CD8-positive, alpha-beta T cell (primary cell): ENCODE measurements at regions of chr12 and their contacts with region 1.

Region 1: GRCh38 chr12:810671-811415 is 58.5 kb downstream of the WNK1 start:
- DNase-seq: no peak
- ATAC-seq: peak; percentile 17
- H3K4me3 ChIP-seq: no peak overlapping the region
- H3K4me3 Mint-ChIP-seq: peak overlapping the region; percentile 33
- H3K27ac ChIP-seq: peak overlapping the region in 1 of 2 experiments; percentile 26
- H3K27ac Mint-ChIP-seq: peak overlapping the region; percentile 73
- H3K4me1 ChIP-seq: peaks cover 45% of the 10 kb centered on the region
- H3K4me1 Mint-ChIP-seq: peaks cover 68% of the 10 kb centered on the region
- H3K27me3 ChIP-seq: no peaks in the 10 kb centered on the region
- H3K27me3 Mint-ChIP-seq: no peaks in the 10 kb centered on the region
- CTCF ChIP-seq: no peak

Region 2: DNA sequence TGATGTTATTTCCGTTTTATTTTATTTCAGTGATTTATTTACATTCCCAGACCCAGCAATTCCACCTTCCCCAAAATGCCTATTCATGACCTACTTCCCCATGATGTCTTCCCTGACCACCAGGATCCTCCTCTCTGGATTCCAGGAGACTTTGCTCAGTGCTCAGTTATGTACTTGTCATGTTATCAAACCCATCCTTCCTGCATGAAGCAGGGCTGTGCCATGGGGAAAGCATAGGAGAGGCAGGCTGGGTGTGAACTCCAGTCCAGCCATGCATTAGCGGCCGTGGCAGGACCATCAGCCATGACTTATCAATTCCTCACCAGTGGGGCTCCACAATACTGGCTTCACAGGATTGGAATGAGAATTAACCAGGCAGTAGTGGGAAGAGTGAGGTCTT is 293.3 kb before region 1 on chr12:
- CTCF ChIA-PET with region 1: no interaction called
- POLR2A ChIA-PET with region 1: no interaction called
- intact Hi-C with region 1: no loop called
- DNase-seq: no peak
- ATAC-seq: no peak
- H3K4me3 ChIP-seq: no peak overlapping the region
- H3K4me3 Mint-ChIP-seq: no peak overlapping the region
- H3K27ac ChIP-seq: no peak overlapping the region
- H3K27ac Mint-ChIP-seq: no peak overlapping the region
- H3K4me1 ChIP-seq: no peaks in the 10 kb centered on the region
- H3K4me1 Mint-ChIP-seq: no peaks in the 10 kb centered on the region
- H3K27me3 ChIP-seq: no peaks in the 10 kb centered on the region
- H3K27me3 Mint-ChIP-seq: peaks cover 34% of the 10 kb centered on the region
- CTCF ChIP-seq: no peak

Region 3: GRCh38 chr12:575948-576612 is 234.8 kb before region 1 on chr12:
- CTCF ChIA-PET with region 1: interaction called, 107 read pairs
- POLR2A ChIA-PET with region 1: interaction called, 4 read pairs
- intact Hi-C with region 1: loop called (anchors 1 kb)
- DNase-seq: peak; percentile 73 to 95 (median 81)
- ATAC-seq: peak; percentile 98
- H3K4me3 ChIP-seq: peak overlapping the region; percentile 25 to 34
- H3K4me3 Mint-ChIP-seq: peak overlapping the region; percentile 69
- H3K27ac ChIP-seq: no peak overlapping the region
- H3K27ac Mint-ChIP-seq: peak overlapping the region; percentile 37
- H3K4me1 ChIP-seq: peaks cover 4% of the 10 kb centered on the region
- H3K4me1 Mint-ChIP-seq: peaks cover 14% of the 10 kb centered on the region
- H3K27me3 ChIP-seq: no peaks in the 10 kb centered on the region
- H3K27me3 Mint-ChIP-seq: no peaks in the 10 kb centered on the region
- CTCF ChIP-seq: peak; percentile 98

Region 4: DNA sequence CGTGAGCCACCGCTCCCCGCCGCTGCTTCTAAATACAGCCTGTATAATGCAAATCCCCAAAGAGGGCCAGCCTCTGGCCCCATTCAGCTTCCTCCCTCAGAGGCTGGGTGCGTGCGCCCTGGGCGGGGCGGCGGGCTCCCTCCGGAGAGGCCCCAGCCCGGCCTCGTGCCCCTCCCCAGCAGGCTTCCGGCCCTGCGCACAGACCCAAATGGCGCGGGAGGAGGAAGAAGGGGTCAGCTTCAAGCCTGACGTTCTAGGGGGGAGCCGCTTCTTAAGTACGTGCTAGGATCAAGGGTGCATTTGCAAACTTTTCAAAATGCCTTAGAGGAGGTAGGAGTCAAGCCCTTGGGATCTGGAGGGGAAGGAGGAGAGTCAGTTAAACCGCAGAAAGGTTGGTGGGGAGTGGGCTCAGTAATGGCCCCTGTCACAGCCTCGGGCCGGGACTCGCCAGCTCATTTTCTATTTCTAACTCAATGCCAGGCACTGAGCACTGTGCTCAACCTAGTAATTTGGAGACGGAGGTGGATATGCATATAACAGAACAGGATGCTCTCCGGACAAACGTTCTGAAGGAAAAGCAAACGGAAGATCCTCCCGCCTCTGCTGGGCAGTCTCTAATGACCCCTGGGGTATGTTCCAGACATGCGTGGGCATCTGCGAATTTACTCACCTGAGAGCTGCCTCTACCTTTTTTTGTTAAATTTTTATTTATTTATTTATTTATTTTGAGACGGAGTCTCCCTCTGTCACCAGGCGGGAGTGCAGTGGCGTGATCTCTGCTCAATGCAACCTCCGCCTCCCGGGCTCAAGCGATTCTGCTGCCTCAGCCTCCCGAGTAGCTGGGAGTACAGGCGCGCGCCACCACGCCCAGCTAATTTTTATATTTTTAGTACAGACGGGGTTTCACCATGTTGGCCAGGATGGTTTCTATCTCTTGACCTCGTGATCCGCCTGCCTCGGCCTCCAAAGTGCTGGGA is 179.9 kb before region 1 on chr12:
- CTCF ChIA-PET with region 1: interaction called, 11 read pairs
- POLR2A ChIA-PET with region 1: no interaction called
- intact Hi-C with region 1: no loop called
- DNase-seq: peak in 8 of 9 experiments; percentile 19 to 83 (median 64)
- ATAC-seq: peak; percentile 93
- H3K4me3 ChIP-seq: peak overlapping the region in 1 of 2 experiments; percentile 54
- H3K4me3 Mint-ChIP-seq: peak overlapping the region; percentile 78
- H3K27ac ChIP-seq: peak overlapping the region in 1 of 2 experiments; percentile 53
- H3K27ac Mint-ChIP-seq: peak overlapping the region; percentile 93
- H3K4me1 ChIP-seq: no peaks in the 10 kb centered on the region
- H3K4me1 Mint-ChIP-seq: peaks cover 14% of the 10 kb centered on the region
- H3K27me3 ChIP-seq: no peaks in the 10 kb centered on the region
- H3K27me3 Mint-ChIP-seq: no peaks in the 10 kb centered on the region
- CTCF ChIP-seq: no peak

Region 5: GRCh38 chr12:650983-651382 is 159.9 kb before region 1 on chr12:
- CTCF ChIA-PET with region 1: interaction called, 10 read pairs
- POLR2A ChIA-PET with region 1: no interaction called
- intact Hi-C with region 1: loop called (anchors 1 to 2 kb)
- DNase-seq: peak in 1 of 9 experiments; percentile 49
- ATAC-seq: no peak
- H3K4me3 ChIP-seq: no peak overlapping the region
- H3K4me3 Mint-ChIP-seq: no peak overlapping the region
- H3K27ac ChIP-seq: no peak overlapping the region
- H3K27ac Mint-ChIP-seq: no peak overlapping the region
- H3K4me1 ChIP-seq: no peaks in the 10 kb centered on the region
- H3K4me1 Mint-ChIP-seq: peaks cover 6% of the 10 kb centered on the region
- H3K27me3 ChIP-seq: no peaks in the 10 kb centered on the region
- H3K27me3 Mint-ChIP-seq: no peaks in the 10 kb centered on the region
- CTCF ChIP-seq: no peak

Region 6: DNA sequence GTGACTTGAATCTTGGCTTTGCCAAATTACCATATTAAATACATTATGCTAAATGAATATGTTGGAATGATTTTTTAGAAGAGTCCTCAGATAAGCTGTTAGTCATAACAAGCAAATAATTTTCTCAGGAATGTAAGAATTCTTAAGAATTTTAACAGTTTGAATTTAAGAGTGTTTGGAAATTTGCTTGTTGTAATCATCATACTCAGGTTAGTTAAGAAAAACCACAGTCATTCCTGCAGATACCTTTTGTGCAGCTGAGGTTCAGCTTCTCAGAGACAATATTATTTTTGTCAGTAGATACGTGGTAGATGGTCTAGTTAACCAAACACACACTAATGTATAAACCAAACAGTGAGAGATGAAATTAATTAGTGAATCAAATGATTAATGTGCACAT is 49.6 kb before region 1 on chr12:
- CTCF ChIA-PET with region 1: interaction called, 15 read pairs
- POLR2A ChIA-PET with region 1: no interaction called
- intact Hi-C with region 1: no loop called
- DNase-seq: no peak
- ATAC-seq: no peak
- H3K4me3 ChIP-seq: no peak overlapping the region
- H3K4me3 Mint-ChIP-seq: peak overlapping the region; percentile 3
- H3K27ac ChIP-seq: no peak overlapping the region
- H3K27ac Mint-ChIP-seq: peak overlapping the region; percentile 50
- H3K4me1 ChIP-seq: peaks cover 35% of the 10 kb centered on the region
- H3K4me1 Mint-ChIP-seq: peaks cover 72% of the 10 kb centered on the region
- H3K27me3 ChIP-seq: no peaks in the 10 kb centered on the region
- H3K27me3 Mint-ChIP-seq: no peaks in the 10 kb centered on the region
- CTCF ChIP-seq: no peak

Region 7: GRCh38 chr12:789852-790563 is 20.8 kb before region 1 on chr12:
- CTCF ChIA-PET with region 1: interaction called, 5 read pairs
- POLR2A ChIA-PET with region 1: interaction called, 3 read pairs
- intact Hi-C with region 1: loop called in 1 of 2 experiments (anchors 2 kb)
- DNase-seq: no peak
- ATAC-seq: no peak
- H3K4me3 ChIP-seq: no peak overlapping the region
- H3K4me3 Mint-ChIP-seq: peak overlapping the region; percentile 19
- H3K27ac ChIP-seq: no peak overlapping the region
- H3K27ac Mint-ChIP-seq: peak overlapping the region; percentile 55
- H3K4me1 ChIP-seq: peaks cover 54% of the 10 kb centered on the region
- H3K4me1 Mint-ChIP-seq: peaks cover 88% of the 10 kb centered on the region
- H3K27me3 ChIP-seq: no peaks in the 10 kb centered on the region
- H3K27me3 Mint-ChIP-seq: no peaks in the 10 kb centered on the region
- CTCF ChIP-seq: no peak

Region 8: GRCh38 chr12:1093166-1093751 is 282.4 kb after region 1 on chr12:
- CTCF ChIA-PET with region 1: interaction called, 10 read pairs
- POLR2A ChIA-PET with region 1: no interaction called
- intact Hi-C with region 1: loop called (anchors 5 kb)
- DNase-seq: peak in 4 of 9 experiments; percentile 15 to 68 (median 48)
- ATAC-seq: peak; percentile 75
- H3K4me3 ChIP-seq: no peak overlapping the region
- H3K4me3 Mint-ChIP-seq: no peak overlapping the region
- H3K27ac ChIP-seq: no peak overlapping the region
- H3K27ac Mint-ChIP-seq: no peak overlapping the region
- H3K4me1 ChIP-seq: no peaks in the 10 kb centered on the region
- H3K4me1 Mint-ChIP-seq: peaks cover 22% of the 10 kb centered on the region
- H3K27me3 ChIP-seq: no peaks in the 10 kb centered on the region
- H3K27me3 Mint-ChIP-seq: no peaks in the 10 kb centered on the region
- CTCF ChIP-seq: peak; percentile 76

Region 9: DNA sequence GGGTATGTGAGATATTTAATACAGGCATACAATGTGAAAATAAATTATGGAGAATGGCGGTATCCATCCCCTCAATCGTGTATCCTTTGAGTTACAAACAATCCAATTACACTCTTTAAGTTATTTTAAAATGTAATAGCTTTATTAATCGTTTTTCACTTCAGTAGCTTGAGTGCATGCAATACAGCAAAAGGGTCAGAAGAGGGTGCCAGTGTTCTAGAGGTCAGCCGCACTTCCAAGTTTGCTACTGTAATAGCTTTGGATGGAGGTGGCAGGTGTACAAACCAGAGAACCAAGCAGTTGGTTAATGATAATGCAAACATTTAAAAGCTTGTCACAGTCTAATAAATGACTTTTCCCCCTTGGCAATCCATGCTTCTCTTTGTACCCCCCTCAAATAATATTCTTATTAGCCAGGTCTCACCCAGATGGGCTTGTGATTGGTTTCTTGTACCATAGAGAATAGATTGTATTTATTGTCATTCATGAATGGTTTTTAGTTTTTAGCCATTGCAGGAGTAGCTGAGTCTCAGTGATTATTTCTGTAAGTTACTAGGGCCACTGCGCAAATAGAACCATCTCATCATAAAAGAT is 307.2 kb after region 1 on chr12:
- CTCF ChIA-PET with region 1: no interaction called
- POLR2A ChIA-PET with region 1: no interaction called
- intact Hi-C with region 1: no loop called
- DNase-seq: peak; percentile 48 to 83 (median 74)
- ATAC-seq: peak; percentile 52
- H3K4me3 ChIP-seq: no peak overlapping the region
- H3K4me3 Mint-ChIP-seq: no peak overlapping the region
- H3K27ac ChIP-seq: no peak overlapping the region
- H3K27ac Mint-ChIP-seq: no peak overlapping the region
- H3K4me1 ChIP-seq: peaks cover 7% of the 10 kb centered on the region
- H3K4me1 Mint-ChIP-seq: peaks cover 7% of the 10 kb centered on the region
- H3K27me3 ChIP-seq: no peaks in the 10 kb centered on the region
- H3K27me3 Mint-ChIP-seq: no peaks in the 10 kb centered on the region
- CTCF ChIP-seq: peak; percentile 98

Region 10: GRCh38 chr12:1398673-1399072 is 587.8 kb after region 1 on chr12:
- CTCF ChIA-PET with region 1: no interaction called
- POLR2A ChIA-PET with region 1: no interaction called
- intact Hi-C with region 1: no loop called
- DNase-seq: peak in 1 of 9 experiments; percentile 7
- ATAC-seq: no peak
- H3K4me3 ChIP-seq: no peak overlapping the region
- H3K4me3 Mint-ChIP-seq: no peak overlapping the region
- H3K27ac ChIP-seq: no peak overlapping the region
- H3K27ac Mint-ChIP-seq: no peak overlapping the region
- H3K4me1 ChIP-seq: no peaks in the 10 kb centered on the region
- H3K4me1 Mint-ChIP-seq: no peaks in the 10 kb centered on the region
- H3K27me3 ChIP-seq: no peaks in the 10 kb centered on the region
- H3K27me3 Mint-ChIP-seq: no peaks in the 10 kb centered on the region
- CTCF ChIP-seq: no peak